Caco-2 (cell line): ENCODE measurements at regions of chr6 and their contacts with region 1.

Region 1: DNA sequence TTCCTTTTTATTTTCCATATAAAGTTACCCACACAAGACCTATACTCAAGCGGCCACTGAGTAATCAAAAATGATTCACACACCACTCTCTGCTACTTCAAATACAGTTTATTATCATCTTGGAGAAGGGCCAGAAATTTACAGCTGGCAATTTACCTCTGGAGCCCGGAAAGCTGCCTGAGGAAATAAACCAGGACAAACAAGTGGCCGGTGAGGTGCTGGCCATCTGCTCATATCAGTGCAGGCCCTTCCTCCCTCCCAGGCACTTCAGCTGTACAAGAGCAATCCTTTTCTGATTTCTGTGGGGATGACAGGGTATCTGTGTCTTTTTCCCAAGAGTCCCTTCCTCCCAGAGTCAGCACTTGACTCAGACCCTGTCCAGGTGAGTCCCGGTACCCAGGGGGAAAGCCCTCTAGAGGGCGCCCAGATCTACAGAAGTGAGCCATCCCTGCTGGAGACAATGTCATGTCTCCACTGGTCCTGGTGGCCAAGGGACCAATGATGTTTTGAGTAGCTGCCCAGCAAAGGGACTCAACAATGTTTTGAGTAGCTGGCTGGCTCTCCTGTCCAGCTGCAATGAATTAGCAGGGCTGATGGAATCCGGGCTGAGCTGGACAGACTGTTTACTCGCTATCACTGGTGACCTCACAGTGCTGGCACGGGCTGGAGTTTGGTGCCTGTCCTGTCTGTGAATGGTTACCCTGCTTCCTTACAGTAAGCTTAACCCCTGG is 23.6 kb downstream of the LRP11 start:
- DNase-seq: peak; percentile 79 to 85
- H3K4me3 ChIP-seq: no peak overlapping the region
- H3K4me3 Mint-ChIP-seq: no peak overlapping the region
- H3K27ac Mint-ChIP-seq: no peak overlapping the region
- H3K4me1 ChIP-seq: peaks cover 20% of the 10 kb centered on the region
- H3K4me1 Mint-ChIP-seq: peaks cover 22% of the 10 kb centered on the region
- H3K27me3 ChIP-seq: no peaks in the 10 kb centered on the region
- H3K27me3 Mint-ChIP-seq: no peaks in the 10 kb centered on the region
- CTCF ChIP-seq: peak; percentile 78 to 94

Region 2: GRCh38 chr6:149855037-149855654 is 14.6 kb after region 1 on chr6:
- CTCF ChIA-PET with region 1: no interaction called
- POLR2A ChIA-PET with region 1: no interaction called
- intact Hi-C with region 1: loop called (anchors 1 kb)
- DNase-seq: peak; percentile 68 to 69
- H3K4me3 ChIP-seq: no peak overlapping the region
- H3K4me3 Mint-ChIP-seq: peak overlapping the region; percentile 23
- H3K27ac Mint-ChIP-seq: peak overlapping the region; percentile 81
- H3K4me1 ChIP-seq: peaks cover 32% of the 10 kb centered on the region
- H3K4me1 Mint-ChIP-seq: peaks cover 35% of the 10 kb centered on the region
- H3K27me3 ChIP-seq: no peaks in the 10 kb centered on the region
- H3K27me3 Mint-ChIP-seq: no peaks in the 10 kb centered on the region
- CTCF ChIP-seq: no peak

Region 3: DNA sequence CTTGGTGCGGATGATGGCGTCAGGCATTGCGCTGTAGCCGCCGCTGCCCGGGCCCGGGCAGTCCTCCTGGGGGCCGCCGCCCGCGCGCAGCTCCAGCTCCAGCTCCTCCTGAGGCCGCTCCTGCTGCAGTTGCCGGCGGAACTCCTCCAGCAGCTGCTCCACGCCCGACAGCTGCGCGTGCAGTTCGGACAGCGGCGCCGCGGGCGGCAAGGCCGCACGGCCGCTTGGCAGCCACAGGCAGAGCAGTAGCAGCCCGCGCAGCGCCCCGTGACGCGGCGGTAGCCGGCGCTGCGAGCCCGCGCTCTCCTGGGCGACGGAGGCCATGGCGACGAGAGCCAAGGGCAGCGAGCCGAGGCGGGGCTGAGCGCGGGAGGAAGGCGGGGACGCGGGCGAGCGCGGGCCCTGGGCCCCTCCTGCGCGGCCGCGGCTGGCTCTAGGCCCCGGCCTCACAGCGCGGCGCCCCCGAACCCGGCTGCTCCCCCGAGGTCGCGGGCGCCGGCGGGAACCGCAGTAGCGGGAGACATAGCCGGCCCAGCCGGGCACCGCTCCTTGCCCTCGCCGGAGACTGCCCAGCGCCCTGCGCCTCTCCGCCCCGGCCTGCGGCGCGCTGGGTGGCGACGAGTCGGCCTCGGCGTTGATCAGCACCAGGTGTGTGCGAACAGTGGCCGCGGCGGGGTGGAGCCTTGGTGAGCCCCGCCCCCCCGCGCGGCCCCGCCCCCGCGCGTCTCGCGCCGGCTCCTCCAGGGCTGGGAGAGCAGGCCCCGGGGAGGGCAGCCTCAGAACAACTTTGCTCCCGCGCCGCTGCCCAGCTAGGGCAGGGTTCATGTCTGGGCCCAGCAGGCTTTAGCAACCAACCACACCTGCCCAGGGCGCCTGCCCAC is 23.4 kb after region 1 on chr6 and contains the start of gene LRP11:
- CTCF ChIA-PET with region 1: interaction called, 6 read pairs
- POLR2A ChIA-PET with region 1: no interaction called
- intact Hi-C with region 1: loop called (anchors 1 kb)
- DNase-seq: peak; percentile 83 to 92
- H3K4me3 ChIP-seq: peak within 1 kb of the TSS; percentile 75
- H3K4me3 Mint-ChIP-seq: peak within 1 kb of the TSS; percentile 86
- H3K27ac Mint-ChIP-seq: peak within 1 kb of the TSS; percentile 71
- H3K4me1 ChIP-seq: peaks cover 8% of the 10 kb centered on the region
- H3K4me1 Mint-ChIP-seq: peaks cover 28% of the 10 kb centered on the region
- H3K27me3 ChIP-seq: no peaks in the 10 kb centered on the region
- H3K27me3 Mint-ChIP-seq: no peaks in the 10 kb centered on the region
- CTCF ChIP-seq: no peak
- total RNA-seq, gene LRP11: 17.7 and 18.4 TPM in 2 replicates